Motor neuron (in vitro differentiated cells): ENCODE measurements at regions of chr14 and their contacts with region 1.

Region 1: DNA sequence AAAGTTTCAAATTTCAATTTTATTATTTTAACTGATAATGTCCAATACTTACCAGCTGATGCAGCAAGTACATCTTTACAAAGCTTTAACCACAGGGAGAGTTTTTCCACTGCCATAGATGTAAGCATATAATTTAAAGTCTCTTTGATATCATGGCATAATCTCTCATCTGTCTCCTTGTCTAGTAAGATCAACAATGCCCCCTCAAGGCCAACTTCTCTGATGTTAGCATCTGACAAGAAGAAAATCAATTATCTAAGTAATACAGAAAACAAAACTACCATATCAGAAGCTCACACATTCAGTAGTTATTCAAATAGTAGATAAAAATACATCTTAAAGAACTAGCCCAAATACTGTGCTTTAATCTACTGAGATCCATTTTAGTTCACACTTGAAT is 94.2 kb downstream of the HEATR5A start:
- ATAC-seq: peak in 2 of 8 experiments; percentile 38 to 43
- H3K4me3 ChIP-seq: no peak overlapping the region
- H3K27ac ChIP-seq: no peak overlapping the region
- H3K4me1 ChIP-seq: no peaks in the 10 kb centered on the region

Region 2: GRCh38 chr14:30710876-30711275 is 615.2 kb before region 1 on chr14:
- in situ Hi-C with region 1: no loop called
- ATAC-seq: peak in 1 of 8 experiments; percentile 14
- H3K4me3 ChIP-seq: no peak overlapping the region
- H3K27ac ChIP-seq: no peak overlapping the region
- H3K4me1 ChIP-seq: no peaks in the 10 kb centered on the region

Region 3: DNA sequence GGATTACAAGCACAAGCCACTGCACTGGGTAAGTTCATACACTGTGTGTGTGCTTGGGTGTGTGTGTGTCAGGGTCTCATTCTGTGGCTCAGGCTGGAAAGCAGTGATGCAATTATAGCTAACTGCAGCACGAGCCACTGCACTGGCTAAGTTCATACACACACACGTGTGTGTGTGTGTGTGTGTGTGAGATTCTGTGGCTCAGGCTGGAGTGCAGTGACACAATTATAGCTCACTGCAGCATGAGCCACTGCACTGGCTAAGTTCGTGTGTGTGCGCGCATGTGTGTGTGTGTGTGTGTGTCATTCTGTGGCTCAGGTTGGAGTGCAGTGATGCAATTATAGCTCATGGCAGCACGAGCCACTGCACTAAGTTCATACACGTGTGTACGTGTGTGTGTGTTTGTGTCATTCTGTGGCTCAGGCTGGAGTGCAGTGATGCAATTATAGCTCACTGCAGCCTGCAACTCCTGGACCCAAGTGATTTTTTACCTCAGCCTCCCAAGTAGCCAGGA is 204.0 kb before region 1 on chr14:
- in situ Hi-C with region 1: loop called in 1 of 9 experiments (anchors 25 kb)
- ATAC-seq: peak in 1 of 8 experiments; percentile 12
- H3K4me3 ChIP-seq: no peak overlapping the region
- H3K27ac ChIP-seq: no peak overlapping the region
- H3K4me1 ChIP-seq: no peaks in the 10 kb centered on the region

Region 4: DNA sequence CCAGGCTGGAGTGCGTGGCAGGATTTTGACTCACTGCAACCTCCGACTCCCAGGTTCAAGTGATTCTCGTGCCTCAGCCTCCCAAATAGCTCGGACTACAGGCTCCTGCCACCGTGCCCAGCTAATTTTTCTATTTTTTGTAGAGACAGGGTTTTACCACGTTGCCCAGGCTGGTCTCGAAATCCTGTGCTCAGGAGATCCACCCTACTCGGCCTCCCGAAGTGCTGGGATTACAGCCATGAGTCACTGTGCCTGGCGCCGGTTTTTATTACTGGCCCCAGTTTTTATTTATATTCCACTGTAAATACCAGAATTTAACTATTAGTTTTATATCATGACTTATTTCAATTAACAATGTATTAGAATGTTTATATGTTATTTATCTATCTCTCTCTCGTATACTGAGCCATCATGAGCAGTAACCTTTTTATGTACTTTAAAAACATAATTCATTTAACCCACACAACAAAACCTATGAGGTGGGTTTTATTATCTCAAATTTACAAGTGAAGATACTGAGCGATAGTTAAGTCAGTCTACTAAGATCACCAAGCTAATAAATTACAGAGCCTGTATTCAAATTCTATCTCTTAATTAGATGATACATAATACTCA is 166.3 kb before region 1 on chr14:
- in situ Hi-C with region 1: loop called in 1 of 9 experiments (anchors 25 kb)
- ATAC-seq: peak in 1 of 8 experiments; percentile 25
- H3K4me3 ChIP-seq: no peak overlapping the region
- H3K27ac ChIP-seq: no peak overlapping the region
- H3K4me1 ChIP-seq: no peaks in the 10 kb centered on the region

Region 5: GRCh38 chr14:31703056-31703455 is 376.9 kb after region 1 on chr14:
- in situ Hi-C with region 1: no loop called
- ATAC-seq: no peak
- H3K4me3 ChIP-seq: no peak overlapping the region
- H3K27ac ChIP-seq: no peak overlapping the region
- H3K4me1 ChIP-seq: no peaks in the 10 kb centered on the region

Region 6: DNA sequence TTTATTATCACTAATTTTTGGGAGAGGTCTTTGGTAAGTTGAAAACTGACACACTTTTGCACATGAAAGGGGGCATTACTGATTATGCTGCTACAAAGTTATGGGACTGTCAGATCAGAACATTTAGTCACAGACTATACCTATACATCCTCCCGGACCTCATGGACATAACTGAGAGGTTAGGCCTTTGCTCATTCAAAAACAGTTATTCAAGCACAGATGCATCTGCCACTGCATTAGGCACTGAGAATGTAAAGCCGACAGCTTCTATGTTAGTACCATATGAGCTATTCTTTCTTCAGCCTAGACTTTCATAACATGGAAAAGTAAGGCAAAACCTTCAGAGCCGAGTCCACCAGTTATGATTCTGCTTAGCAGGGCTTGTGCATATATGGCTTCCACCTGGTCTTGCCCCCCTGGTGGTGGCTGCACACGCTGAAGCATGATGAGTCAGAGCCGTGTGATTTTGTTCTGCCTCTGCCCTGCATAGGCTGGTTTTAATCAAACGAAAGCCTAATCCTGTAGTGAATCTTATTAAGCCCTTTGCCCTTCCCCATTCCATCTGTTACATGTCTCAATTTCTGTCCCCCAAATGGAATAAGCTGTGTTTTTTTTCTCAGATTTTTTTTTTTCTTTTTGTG is 898.7 kb after region 1 on chr14:
- in situ Hi-C with region 1: no loop called
- ATAC-seq: peak; percentile 99 to 100 (median 100)
- H3K4me3 ChIP-seq: no peak overlapping the region
- H3K27ac ChIP-seq: peak overlapping the region in 1 of 2 donors; percentile 39
- H3K4me1 ChIP-seq: peaks cover 9 to 11% of the 10 kb centered on the region in 2 donors